Uterus (tissue), 4 donors: ENCODE measurements at regions of chr7 and their contacts with region 1.

Region 1: DNA sequence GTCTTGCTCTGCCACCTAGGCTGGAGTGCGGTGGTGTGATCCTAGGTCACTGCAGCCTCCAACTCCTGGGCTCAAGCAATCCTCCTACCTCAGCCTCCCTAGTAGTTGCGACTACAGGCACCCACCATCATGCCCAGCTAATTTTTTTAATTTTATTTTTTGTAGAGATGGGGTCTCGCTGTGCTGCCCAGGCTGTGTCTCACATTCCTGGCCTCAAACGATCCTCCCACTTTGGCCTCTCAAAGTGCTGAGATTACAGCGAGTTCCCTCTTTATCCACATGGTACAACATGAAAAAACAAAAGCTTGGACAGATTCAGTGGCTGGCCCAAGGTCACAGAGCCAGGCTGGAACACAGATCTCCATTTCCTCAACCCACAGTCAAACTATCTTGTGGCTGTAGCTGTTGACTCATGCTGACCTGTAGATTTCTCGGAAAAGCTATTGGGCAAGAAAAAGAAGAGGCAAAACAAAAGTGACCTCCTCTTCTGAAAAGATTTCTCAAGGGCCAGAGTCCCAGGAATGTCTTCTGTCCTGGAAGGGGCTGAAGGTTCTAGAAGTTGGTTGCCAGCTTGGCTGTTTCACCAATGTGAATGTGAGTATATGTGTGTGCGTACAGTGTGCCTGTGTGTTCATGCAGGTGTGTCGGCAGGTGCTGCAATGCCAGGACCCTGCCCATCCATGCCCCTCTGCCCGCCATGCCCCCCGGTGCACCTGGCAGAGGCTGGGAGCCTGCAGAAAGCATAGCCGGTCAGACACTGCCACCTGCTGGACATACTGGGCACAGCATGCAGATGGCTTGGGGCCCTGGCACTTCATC is 28.4 kb downstream of the TMEM130 start:
- DNase-seq: peak; percentile 28 to 41
- H3K4me3 ChIP-seq: no peak overlapping the region
- H3K27ac ChIP-seq: no peak overlapping the region
- H3K4me1 ChIP-seq: no peaks in the 10 kb centered on the region
- H3K27me3 ChIP-seq: no peaks in the 10 kb centered on the region
- CTCF ChIP-seq: peak; percentile 78 to 94 (median 87)
- POLR2A ChIP-seq: no peak

Region 2: GRCh38 chr7:98434095-98434494 is 407.3 kb before region 1 on chr7:
- intact Hi-C with region 1: loop called (anchors 10 kb)
- DNase-seq: no peak
- H3K4me3 ChIP-seq: no peak overlapping the region
- H3K27ac ChIP-seq: no peak overlapping the region
- H3K4me1 ChIP-seq: no peaks in the 10 kb centered on the region
- H3K27me3 ChIP-seq: no peaks in the 10 kb centered on the region
- CTCF ChIP-seq: no peak
- POLR2A ChIP-seq: no peak

Region 3: DNA sequence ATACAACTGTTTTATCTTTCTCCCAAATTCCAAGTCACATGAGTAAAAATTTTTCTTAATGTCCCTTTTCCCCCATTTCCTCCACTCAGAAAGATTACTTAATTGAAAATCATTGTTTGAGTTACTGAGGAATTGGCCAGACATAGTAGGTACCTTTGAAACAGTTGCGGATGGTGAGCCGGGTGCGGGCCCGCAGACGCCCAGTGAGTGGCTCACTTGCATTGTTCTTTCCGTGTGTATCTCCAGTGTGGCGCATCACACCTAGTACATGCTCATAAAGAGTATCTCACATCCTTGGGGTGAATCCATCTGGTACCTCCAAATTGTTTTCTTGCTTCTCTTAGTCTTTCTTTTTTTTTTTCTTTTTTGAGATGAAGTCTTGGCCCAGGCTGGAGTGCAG is 51.2 kb after region 1 on chr7:
- intact Hi-C with region 1: no loop called
- DNase-seq: no peak
- H3K4me3 ChIP-seq: no peak overlapping the region
- H3K27ac ChIP-seq: no peak overlapping the region
- H3K4me1 ChIP-seq: no peaks in the 10 kb centered on the region
- H3K27me3 ChIP-seq: no peaks in the 10 kb centered on the region
- CTCF ChIP-seq: no peak
- POLR2A ChIP-seq: no peak